H1 (cell line): ENCODE measurements at regions of chr10 and their contacts with region 1.

Region 1: DNA sequence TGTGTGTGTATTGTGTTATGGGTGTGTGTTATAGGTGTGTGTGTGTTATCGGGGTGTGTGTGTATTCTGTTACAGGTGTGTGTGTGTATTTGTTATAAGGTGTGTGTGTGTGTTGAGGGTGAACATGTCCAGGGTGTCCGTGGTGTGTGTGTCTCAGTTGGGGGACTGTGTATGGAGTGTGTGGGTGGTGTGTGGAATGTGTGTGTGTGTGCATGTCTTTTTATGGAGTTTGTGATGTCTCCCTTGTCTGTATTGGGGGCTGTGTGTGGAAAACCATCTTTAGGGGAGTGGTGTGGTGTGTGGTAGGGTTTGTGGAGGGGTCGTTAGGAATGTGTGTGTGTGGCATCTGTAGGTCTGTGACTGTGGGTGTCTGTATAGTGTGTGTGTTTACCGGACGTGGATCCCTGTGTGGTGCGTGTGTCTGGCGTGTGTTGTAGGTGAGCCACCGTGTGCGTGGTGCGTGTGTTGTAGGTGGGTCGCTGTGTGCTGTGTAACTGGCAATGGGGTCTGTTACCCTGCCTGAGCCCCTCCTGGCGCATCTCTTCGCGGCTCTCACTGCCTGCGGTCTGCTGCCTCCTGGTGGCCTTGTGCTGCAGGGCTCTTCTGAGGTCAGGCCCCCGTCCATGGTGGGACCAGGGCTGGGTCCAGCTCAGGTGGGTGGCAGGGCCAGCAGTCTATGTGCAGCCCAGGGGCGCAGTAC is 61.7 kb downstream of the PALD1 start:
- DNase-seq: peak in 1 of 2 experiments; percentile 78
- H3K4me3 ChIP-seq: no peak overlapping the region
- H3K27ac ChIP-seq: no peak overlapping the region
- H3K4me1 ChIP-seq: peaks cover 3 to 9% (median 6%) of the 10 kb centered on the region in 4 experiments; a peak in 4 of 7 replicates
- H3K27me3 ChIP-seq: no peaks in the 10 kb centered on the region
- CTCF ChIP-seq: peak; percentile 97 to 98 (median 97)
- EP300 ChIP-seq: no peak
- POLR2A ChIP-seq: no peak
- RAD21 ChIP-seq: peak; percentile 95 to 97

Region 2: GRCh38 chr10:70430493-70431445 is 109.5 kb before region 1 on chr10:
- CTCF ChIA-PET with region 1: interaction called, 30 read pairs
- POLR2A ChIA-PET with region 1: no interaction called
- DNase-seq: no peak
- H3K4me3 ChIP-seq: no peak overlapping the region
- H3K27ac ChIP-seq: no peak overlapping the region
- H3K4me1 ChIP-seq: no peaks in the 10 kb centered on the region; a peak in 1 of 7 replicates
- H3K27me3 ChIP-seq: no peaks in the 10 kb centered on the region
- CTCF ChIP-seq: peak in 2 of 3 experiments; percentile 30 to 46; a peak in 2 of 4 replicates
- EP300 ChIP-seq: no peak
- POLR2A ChIP-seq: no peak
- RAD21 ChIP-seq: peak; percentile 54 to 66

Region 3: GRCh38 chr10:70493660-70494234 is 46.5 kb before region 1 on chr10:
- CTCF ChIA-PET with region 1: interaction called, 14 read pairs
- POLR2A ChIA-PET with region 1: interaction called, 3 read pairs
- DNase-seq: peak in 1 of 2 experiments; percentile 81
- H3K4me3 ChIP-seq: peak overlapping the region in 1 of 4 experiments; percentile 7; a peak in 3 of 8 replicates
- H3K27ac ChIP-seq: peak overlapping the region; percentile 13; the same call in 1 of the 2 replicates
- H3K4me1 ChIP-seq: peaks cover 13 to 31% (median 19%) of the 10 kb centered on the region in 4 experiments
- H3K27me3 ChIP-seq: no peaks in the 10 kb centered on the region
- CTCF ChIP-seq: no peak
- EP300 ChIP-seq: no peak
- POLR2A ChIP-seq: no peak; a peak in 1 of 3 replicates
- RAD21 ChIP-seq: no peak

Region 4: GRCh38 chr10:70500812-70501301 is 39.4 kb before region 1 on chr10:
- CTCF ChIA-PET with region 1: interaction called, 13 read pairs
- POLR2A ChIA-PET with region 1: interaction called, 3 read pairs
- DNase-seq: no peak
- H3K4me3 ChIP-seq: no peak overlapping the region
- H3K27ac ChIP-seq: peak overlapping the region; percentile 30; the same call in 1 of the 2 replicates
- H3K4me1 ChIP-seq: peaks cover 0 to 11% (median 3%) of the 10 kb centered on the region in 4 experiments; a peak in 5 of 7 replicates
- H3K27me3 ChIP-seq: no peaks in the 10 kb centered on the region
- CTCF ChIP-seq: no peak
- EP300 ChIP-seq: no peak
- POLR2A ChIP-seq: no peak
- RAD21 ChIP-seq: no peak

Region 5: DNA sequence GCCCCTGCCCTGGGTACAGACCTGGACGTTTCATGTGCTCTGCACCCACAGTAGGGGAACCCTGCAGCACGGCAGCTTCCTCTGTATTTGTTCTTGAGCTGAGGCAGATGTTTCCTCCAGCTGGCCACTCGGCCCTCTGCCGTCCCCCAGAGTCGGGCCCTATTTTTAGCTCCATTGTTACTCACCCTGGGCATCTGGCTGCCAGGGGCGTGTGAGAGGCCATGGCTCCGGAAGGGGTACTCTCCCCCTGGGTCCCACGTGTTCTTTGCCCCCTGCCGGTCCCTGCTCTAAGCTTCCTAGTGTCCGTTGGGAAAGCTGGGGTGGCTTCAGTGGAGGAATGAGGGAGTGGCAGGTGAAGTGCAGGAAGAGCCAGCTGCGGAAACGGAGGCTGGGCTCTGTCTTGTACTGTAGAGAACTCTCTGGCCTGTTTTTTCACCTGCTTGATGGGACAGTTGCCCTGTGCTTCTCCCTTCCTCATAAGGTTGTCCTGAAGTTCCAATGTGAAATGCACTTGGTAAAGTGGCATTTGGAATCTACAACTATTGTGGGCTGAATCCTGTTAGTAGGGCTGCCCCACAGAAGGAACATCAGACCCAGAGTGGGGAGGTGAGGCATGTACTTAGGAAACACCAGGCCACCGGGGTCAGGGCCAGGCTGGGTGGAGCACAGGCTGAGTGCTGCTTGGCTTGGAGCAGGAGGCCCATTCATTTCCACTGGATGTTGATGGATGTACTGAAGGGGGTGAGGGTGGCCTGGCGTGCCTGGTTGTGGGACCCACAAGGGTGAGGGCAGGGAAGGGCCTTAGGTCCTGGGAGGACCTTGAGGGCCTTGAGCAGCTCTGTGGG is 31.1 kb before region 1 on chr10:
- CTCF ChIA-PET with region 1: interaction called, 14 read pairs
- POLR2A ChIA-PET with region 1: no interaction called
- DNase-seq: peak in 1 of 2 experiments; percentile 60
- H3K4me3 ChIP-seq: no peak overlapping the region
- H3K27ac ChIP-seq: no peak overlapping the region
- H3K4me1 ChIP-seq: peaks cover 0 to 26% (median 19%) of the 10 kb centered on the region in 4 experiments; a peak in 6 of 7 replicates
- H3K27me3 ChIP-seq: no peaks in the 10 kb centered on the region; a peak in 2 of 7 replicates
- CTCF ChIP-seq: no peak
- EP300 ChIP-seq: no peak
- POLR2A ChIP-seq: no peak
- RAD21 ChIP-seq: no peak; a peak in 1 of 4 replicates

Region 6: GRCh38 chr10:70518695-70519094 is 21.5 kb before region 1 on chr10:
- CTCF ChIA-PET with region 1: interaction called, 29 read pairs
- POLR2A ChIA-PET with region 1: interaction called, 3 read pairs
- DNase-seq: no peak
- H3K4me3 ChIP-seq: no peak overlapping the region
- H3K27ac ChIP-seq: no peak overlapping the region
- H3K4me1 ChIP-seq: peaks cover 0 to 4% (median 3%) of the 10 kb centered on the region in 4 experiments; a peak in 6 of 7 replicates
- H3K27me3 ChIP-seq: no peaks in the 10 kb centered on the region; a peak in 1 of 7 replicates
- CTCF ChIP-seq: no peak
- EP300 ChIP-seq: no peak
- POLR2A ChIP-seq: no peak
- RAD21 ChIP-seq: no peak

Region 7: GRCh38 chr10:70528726-70529362 is 11.4 kb before region 1 on chr10:
- CTCF ChIA-PET with region 1: interaction called, 29 read pairs
- POLR2A ChIA-PET with region 1: no interaction called
- DNase-seq: no peak
- H3K4me3 ChIP-seq: no peak overlapping the region
- H3K27ac ChIP-seq: no peak overlapping the region
- H3K4me1 ChIP-seq: no peaks in the 10 kb centered on the region
- H3K27me3 ChIP-seq: no peaks in the 10 kb centered on the region
- CTCF ChIP-seq: no peak
- EP300 ChIP-seq: no peak
- POLR2A ChIP-seq: no peak
- RAD21 ChIP-seq: no peak

Region 8: DNA sequence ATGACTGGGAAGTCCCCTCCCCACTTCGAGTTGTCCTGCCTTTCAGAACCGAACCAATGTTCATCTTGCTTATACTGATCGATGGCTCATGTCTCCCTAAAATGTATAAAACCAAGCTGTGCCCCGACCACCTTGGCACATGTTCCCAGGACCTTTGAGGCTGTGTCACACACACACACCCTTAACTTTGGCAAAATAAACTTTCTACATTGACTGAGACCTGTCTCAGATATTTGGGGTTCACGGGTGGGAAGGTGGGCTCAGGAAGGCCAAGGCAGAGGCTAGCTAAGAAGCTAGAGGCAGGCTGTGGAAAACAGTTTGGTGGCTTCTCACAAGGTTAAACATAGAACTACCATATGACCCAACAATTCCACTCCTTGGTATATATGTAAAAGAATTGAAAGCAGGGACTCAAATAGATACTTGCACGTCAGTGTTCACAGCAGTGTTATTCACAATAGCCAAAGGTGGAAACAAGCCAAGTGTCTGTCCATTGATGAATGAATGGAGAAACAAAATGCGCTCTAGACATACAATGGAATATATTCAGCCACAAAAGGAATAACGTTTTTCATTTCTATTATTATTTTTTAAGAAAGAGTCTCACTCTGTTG is 46.9 kb after region 1 on chr10:
- CTCF ChIA-PET with region 1: no interaction called
- POLR2A ChIA-PET with region 1: no interaction called
- DNase-seq: no peak
- H3K4me3 ChIP-seq: no peak overlapping the region
- H3K27ac ChIP-seq: no peak overlapping the region
- H3K4me1 ChIP-seq: peaks cover 0 to 6% (median 4%) of the 10 kb centered on the region in 4 experiments; a peak in 5 of 7 replicates
- H3K27me3 ChIP-seq: peaks cover 0 to 2% (median 0%) of the 10 kb centered on the region in 4 experiments; a peak in 1 of 7 replicates
- CTCF ChIP-seq: no peak
- EP300 ChIP-seq: no peak
- POLR2A ChIP-seq: no peak
- RAD21 ChIP-seq: no peak

Region 9: DNA sequence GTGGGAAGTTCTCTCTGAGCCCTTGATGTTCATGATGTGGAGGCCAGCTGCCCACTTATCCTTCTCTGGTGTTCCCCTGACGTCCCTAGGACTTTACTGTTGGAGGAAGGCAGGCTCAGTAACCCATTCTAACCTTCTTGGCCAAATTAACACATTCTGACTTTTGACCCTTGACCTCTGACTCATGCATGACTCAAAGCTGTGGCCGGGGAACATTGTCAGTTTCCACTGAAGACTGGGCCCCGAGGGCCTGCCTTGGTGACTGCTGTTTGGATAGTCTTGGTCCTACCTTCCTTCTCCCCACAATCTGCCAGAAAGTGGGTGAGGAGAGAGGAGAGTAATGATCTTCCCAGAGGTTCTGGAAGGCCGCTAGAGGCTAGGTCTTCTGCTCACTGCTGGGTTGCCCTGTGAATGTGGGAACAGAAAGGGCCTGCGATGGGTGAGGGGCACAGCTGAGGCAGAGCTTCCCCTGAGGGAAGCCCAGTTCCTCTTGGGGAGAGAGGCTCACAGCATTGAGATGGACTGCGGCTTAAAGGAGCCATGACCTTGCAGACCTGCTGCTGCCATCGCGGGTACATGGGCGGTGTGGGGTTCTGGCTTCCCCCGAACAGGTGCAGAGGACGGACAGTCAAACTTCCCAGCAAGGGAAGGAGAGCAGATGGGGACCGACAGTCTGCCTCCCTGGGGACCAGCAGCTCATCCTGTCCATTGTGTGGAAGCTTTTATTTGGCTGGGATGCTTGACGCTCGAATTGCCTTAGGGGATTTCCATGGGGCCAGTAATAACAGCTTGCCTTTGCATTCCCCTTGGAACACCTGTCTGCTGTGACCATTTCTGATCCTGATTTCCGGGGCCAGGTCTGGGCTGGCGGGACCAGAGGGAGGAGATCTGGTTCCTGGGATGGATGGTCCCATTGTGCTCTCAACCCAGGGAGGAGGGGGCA is 175.9 kb after region 1 on chr10:
- CTCF ChIA-PET with region 1: no interaction called
- POLR2A ChIA-PET with region 1: no interaction called
- DNase-seq: no peak
- H3K4me3 ChIP-seq: no peak overlapping the region
- H3K27ac ChIP-seq: no peak overlapping the region
- H3K4me1 ChIP-seq: peaks cover 0 to 3% (median under 1%) of the 10 kb centered on the region in 4 experiments; a peak in 4 of 7 replicates
- H3K27me3 ChIP-seq: no peaks in the 10 kb centered on the region
- CTCF ChIP-seq: no peak
- EP300 ChIP-seq: no peak
- POLR2A ChIP-seq: no peak
- RAD21 ChIP-seq: no peak